ENCODE measurements at regions of chr1 and their contacts with region 1.

Region 1: GRCh38 chr1:18907021-18907916 is 4.9 kb upstream of the ALDH4A1 start:
- DNase-seq: peak; percentile 42 to 84 (median 66)

Region 2: GRCh38 chr1:18875107-18875795 is 32.0 kb before region 1 on chr1:
- intact Hi-C with region 1: no loop called
- DNase-seq: peak; percentile 69 to 93 (median 85)

Region 3: DNA sequence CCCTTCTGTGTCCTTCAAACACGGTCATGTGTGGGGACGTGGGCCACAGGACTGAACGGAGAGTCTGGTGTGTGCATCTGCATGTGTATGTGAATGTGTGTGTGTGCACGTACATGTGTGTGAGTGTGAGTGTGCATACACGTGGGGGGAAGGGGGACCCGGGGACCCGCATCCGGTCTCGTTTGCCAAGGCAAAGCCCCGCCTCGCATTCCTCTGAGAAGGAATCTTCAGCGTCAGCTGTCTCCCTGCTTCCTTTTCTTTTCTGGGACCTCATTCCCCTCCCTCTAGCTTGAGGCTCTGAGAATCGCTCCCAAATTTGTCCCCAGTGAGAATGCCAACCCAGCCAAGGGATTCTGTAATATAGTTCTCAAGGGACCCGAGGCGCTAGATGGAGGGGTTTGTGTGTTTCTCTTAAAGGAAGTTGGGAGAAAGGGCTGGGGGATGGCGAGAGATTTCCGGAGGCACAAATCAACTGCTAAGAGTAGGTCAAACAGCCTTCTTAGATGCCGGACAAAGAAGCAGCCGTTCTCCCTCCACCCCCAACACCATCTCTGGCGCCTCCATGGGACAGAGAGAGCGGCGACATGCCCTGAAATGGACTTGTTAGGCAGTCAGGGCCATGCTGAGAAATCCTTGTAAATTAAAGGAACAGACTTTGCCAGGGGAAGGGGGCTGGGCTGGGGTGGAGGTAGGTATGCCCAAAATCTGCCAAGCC is 42.6 kb after region 1 on chr1:
- intact Hi-C with region 1: loop called (anchors 5 kb)
- DNase-seq: peak in 39 of 42 donors; percentile 43 to 87 (median 70)

Region 4: DNA sequence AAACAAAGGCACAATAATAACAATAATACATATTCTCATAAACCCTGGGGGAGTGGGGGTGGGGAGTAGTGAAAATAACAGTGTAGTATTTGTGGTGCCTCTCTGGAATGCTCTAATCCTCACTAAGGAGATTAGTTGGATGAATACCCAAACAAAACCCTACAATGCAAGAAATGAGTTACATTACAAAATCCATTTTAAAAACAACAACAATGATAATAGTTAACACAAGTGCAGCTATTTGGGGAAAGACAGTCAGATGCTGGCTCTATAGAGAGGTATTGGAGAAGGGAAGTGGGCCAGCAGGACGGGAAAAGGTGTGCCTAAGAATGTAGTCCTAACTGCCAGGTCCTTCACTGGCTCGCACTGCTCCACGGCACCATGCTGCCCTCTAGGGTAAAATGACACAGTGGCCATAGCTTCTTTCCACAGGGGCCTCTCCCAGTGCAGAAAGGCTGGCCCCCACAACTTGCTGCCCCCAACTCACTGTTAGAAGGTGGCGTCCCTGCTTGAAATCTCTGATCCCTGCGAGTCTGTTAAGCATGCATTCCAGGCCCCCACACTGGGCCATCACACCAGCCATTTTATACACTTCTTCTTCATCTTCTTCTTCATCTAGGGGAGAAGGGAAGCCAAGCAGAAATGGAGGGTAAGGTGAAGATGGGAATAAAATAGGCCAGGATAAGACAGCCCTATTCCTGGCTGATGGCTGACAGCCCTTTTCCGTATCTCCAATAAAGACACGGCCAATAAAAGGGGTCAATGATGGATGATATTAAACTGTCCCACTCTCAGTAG is 189.0 kb after region 1 on chr1:
- intact Hi-C with region 1: loop called (anchors 5 kb)
- DNase-seq: peak; percentile 15 to 84 (median 56)

Measured in head of caudate nucleus (tissue), 42 donors.